H1 (cell line): ENCODE measurements at regions of chr1 and their contacts with region 1.

Region 1: DNA sequence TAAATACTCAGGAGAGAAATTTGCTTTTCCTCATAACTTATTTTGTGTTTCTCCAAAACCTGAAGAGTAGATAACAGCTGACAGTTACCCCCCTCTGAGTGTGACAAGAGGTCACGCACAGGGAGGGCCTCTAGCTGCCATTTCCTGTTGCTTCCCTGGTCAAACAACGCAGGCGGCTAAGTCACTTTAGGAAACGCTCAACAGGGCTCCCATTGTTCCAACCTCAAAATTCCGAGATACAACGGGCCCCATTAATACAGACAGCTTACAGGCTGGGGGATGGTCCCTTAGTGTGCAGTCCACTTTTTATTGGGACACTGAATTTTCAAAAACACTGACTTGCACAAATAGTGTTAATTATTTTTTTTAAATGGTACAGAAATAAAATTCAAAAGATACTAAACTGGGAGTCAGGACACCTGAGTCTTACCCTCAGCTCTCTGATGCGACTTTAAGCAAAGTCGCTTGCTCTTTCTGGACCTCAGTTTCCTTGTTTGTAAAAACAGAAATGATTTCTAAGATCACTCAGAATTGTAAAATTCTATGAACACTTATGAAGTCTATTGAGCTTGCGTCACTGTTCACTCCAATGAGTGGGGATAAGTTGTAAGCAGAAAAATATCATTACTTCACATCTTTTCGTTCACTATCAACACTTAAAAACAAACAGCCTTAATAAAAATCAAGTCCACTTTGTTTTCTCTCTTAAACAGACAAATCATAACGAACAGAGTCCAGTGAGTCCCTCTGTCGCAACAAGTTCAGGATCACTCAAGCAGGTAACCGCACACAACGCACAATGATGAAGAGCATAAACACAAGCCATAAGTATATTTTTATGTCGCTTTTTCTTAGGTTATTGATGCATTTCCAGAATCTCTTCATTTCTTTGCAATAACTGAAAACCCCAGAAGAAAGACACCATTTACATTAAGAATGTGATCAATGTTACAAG is 13.5 kb downstream of the LZIC start:
- DNase-seq: peak in 1 of 2 experiments; percentile 54
- H3K4me3 ChIP-seq: peak overlapping the region in 1 of 4 experiments; percentile 28; a peak in 2 of 8 replicates
- H3K27ac ChIP-seq: no peak overlapping the region
- H3K4me1 ChIP-seq: peaks cover 0 to 5% (median 4%) of the 10 kb centered on the region in 4 experiments; a peak in 6 of 7 replicates
- H3K27me3 ChIP-seq: no peaks in the 10 kb centered on the region
- CTCF ChIP-seq: no peak
- EP300 ChIP-seq: peak in 1 of 2 experiments; percentile 66; a peak in 1 of 3 replicates
- POLR2A ChIP-seq: no peak
- RAD21 ChIP-seq: no peak

Region 2: GRCh38 chr1:9910425-9911178 is 19.1 kb before region 1 on chr1:
- CTCF ChIA-PET with region 1: interaction called, 8 read pairs
- POLR2A ChIA-PET with region 1: interaction called, 10 read pairs
- DNase-seq: peak; percentile 96 to 100
- H3K4me3 ChIP-seq: peak overlapping the region; percentile 56 to 80 (median 78)
- H3K27ac ChIP-seq: peak overlapping the region; percentile 60
- H3K4me1 ChIP-seq: peaks cover 2 to 6% (median 4%) of the 10 kb centered on the region in 4 experiments; a peak in 4 of 7 replicates
- H3K27me3 ChIP-seq: no peaks in the 10 kb centered on the region
- CTCF ChIP-seq: no peak
- EP300 ChIP-seq: no peak
- POLR2A ChIP-seq: peak; percentile 51 to 74
- RAD21 ChIP-seq: no peak

Region 3: DNA sequence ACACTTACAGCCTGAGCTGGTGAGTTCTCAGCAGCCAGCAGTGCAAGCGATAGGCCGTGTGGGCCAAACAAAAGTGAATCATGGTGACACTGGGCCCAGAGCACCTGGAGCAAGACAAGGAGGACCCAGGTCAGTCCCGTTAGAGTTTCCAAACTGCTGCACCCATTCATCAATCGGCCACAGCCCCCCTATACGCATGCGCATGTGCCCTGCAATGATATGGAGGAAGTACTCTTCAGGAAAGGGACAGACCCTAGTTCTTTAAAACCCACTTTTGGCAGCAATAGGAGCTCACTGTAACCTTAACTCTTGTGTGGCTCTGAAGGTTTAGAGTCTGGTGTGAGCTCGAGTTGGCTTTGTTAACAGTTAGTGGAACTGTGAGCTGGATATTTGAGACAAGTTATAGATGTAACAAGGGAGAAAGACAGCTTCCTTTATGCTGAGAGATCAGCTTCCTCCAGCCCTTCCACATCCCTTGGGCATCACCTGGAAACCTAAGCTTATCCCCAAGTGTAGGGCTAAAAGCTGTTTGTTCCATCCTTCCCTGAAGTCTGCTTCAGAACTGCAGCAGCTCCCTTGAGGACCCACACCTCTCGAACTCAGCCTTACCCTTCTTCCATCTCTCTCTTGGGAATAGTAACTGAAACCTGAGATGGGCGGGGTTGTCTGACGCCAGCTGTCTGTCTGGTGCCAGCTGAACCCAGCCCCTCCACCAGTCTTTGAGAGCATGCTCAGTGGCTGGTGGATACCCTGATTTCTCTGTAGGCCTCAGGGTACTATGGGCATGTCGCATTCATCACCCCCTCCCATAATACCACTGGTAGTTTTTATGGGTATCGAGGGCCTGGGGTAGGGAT is 31.2 kb after region 1 on chr1:
- CTCF ChIA-PET with region 1: no interaction called
- POLR2A ChIA-PET with region 1: no interaction called
- DNase-seq: peak in 1 of 2 experiments; percentile 62
- H3K4me3 ChIP-seq: no peak overlapping the region
- H3K27ac ChIP-seq: peak overlapping the region; percentile 33
- H3K4me1 ChIP-seq: peaks cover 0 to 9% (median 3%) of the 10 kb centered on the region in 4 experiments; a peak in 4 of 7 replicates
- H3K27me3 ChIP-seq: no peaks in the 10 kb centered on the region
- CTCF ChIP-seq: no peak
- EP300 ChIP-seq: no peak
- POLR2A ChIP-seq: no peak
- RAD21 ChIP-seq: no peak